SK-N-SH (cell line): ENCODE measurements at regions of chr15 and their contacts with region 1.

Region 1: DNA sequence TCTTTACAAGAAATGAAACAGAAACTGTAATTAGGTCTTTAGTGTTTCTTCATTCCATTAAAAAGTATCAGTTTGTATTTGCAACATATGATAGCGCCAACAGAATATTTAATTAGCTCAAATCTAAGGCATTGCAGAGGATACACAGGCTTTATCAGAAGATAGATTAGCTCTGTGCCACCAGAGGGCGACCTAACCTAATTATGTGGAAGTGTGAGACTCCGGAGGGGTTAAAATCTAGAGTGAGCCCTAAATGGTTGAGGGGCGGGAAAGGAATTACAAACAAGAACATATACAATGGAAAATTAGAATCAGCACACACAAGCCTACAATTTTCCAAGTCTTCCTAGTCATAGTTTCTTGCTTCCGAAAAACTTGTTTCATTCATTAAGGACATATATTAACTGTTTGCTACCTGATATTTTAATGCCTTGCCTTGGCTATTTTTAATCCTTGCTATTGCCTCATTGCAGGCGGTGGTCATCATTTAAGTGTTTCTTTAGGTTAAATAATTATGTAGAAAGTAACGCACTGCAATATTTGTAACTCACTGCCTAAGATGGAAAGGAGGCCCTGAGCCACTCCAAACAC is 18.0 kb upstream of the RYR3 start:
- DNase-seq: peak; percentile 67
- H3K4me3 ChIP-seq: no peak overlapping the region; a peak in 1 of 4 replicates
- H3K27ac ChIP-seq: no peak overlapping the region
- H3K4me1 ChIP-seq: no peaks in the 10 kb centered on the region
- H3K27me3 ChIP-seq: no peaks in the 10 kb centered on the region
- CTCF ChIP-seq: peak; percentile 90
- EP300 ChIP-seq: no peak
- RAD21 ChIP-seq: peak; percentile 87

Region 2: DNA sequence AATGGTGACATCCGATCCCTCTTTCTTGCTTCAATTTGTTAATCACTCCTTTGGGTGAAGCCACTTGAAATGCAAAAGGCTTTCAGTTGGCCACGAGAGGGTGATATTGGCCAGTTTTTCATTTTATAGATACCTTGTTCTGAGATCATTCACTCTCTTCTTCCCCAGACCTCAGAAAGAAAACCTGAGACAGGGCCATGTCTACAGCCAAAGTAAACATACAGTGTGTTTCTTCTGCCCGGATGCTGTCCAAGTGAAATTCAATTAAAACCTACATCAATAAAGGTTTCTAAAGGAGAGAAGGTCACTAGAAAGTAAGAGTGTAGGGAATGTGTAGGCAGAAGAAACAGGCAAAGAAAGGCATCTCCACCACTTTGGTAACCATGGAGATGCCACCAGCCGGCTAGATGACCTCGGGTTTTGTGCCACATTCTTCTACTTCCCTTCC is 58.8 kb before region 1 on chr15:
- CTCF ChIA-PET with region 1: interaction called, 11 read pairs
- POLR2A ChIA-PET with region 1: no interaction called
- DNase-seq: peak; percentile 43
- H3K4me3 ChIP-seq: no peak overlapping the region
- H3K27ac ChIP-seq: peak overlapping the region in 1 of 2 experiments; percentile 8; a peak in 1 of 4 replicates
- H3K4me1 ChIP-seq: no peaks in the 10 kb centered on the region; a peak in 1 of 4 replicates
- H3K27me3 ChIP-seq: no peaks in the 10 kb centered on the region
- CTCF ChIP-seq: peak; percentile 87
- EP300 ChIP-seq: no peak
- RAD21 ChIP-seq: peak; percentile 84

Region 3: DNA sequence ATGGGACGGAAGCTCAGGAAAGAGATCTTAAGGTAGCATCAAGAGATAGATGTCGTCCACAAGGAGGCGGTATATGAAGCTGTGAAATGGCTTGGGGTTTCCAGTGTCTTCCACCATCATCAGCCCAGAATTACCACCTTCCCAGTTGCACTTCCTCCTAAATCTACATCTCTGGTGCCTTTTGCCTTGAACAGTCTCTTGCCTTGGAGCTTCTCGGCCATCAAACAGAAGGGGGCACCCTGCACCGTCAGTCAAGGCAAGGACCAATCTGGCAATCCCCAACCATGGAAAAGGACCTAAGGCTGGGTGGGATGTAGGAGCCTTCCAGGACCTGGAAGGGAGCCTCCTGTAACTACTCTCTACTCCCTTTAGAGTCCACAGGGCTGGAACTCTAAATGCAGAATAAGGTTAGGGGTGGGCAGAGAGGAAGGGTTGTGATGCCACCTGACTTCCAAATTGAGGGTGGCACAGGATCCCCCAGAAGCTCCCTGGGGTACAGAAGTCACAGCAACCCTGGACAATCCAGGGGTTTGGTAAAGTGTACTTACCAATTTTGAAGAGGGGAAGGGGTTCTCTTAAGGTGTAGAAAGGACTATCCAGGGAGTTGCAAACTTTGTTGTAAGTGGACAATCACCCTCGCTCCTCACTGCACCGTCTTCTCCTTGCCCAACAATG is 16.9 kb after region 1 on chr15:
- CTCF ChIA-PET with region 1: interaction called, 15 read pairs
- POLR2A ChIA-PET with region 1: no interaction called
- DNase-seq: peak; percentile 28
- H3K4me3 ChIP-seq: no peak overlapping the region
- H3K27ac ChIP-seq: no peak overlapping the region
- H3K4me1 ChIP-seq: peaks cover 0 to 2% of the 10 kb centered on the region in 2 experiments; a peak in 1 of 4 replicates
- H3K27me3 ChIP-seq: peaks cover 41% of the 10 kb centered on the region
- CTCF ChIP-seq: peak; percentile 21
- EP300 ChIP-seq: no peak
- RAD21 ChIP-seq: peak; percentile 48

Region 4: DNA sequence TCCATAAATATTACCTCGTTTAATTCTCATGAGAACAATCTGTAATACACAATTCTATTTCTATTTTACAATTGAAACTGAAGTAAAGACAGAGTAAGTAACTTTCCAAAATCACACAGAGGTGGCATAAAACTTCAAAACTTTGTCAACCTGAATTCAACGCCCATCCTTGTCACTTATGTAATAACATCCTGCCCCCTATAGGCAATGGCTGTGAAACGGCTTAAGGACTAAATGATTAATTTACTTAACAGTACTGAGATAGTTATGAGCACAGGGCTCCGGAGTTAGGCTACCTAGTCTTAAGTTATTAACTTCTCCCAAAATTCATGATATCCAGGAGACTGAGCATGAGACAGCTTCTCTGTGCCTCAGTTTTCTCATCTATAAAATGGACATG is 382.4 kb after region 1 on chr15:
- CTCF ChIA-PET with region 1: interaction called, 13 read pairs
- POLR2A ChIA-PET with region 1: no interaction called
- DNase-seq: peak; percentile 46
- H3K4me3 ChIP-seq: no peak overlapping the region; a peak in 1 of 4 replicates
- H3K27ac ChIP-seq: no peak overlapping the region
- H3K4me1 ChIP-seq: no peaks in the 10 kb centered on the region
- H3K27me3 ChIP-seq: no peaks in the 10 kb centered on the region; the same call in 1 of the 2 replicates
- CTCF ChIP-seq: peak; percentile 57
- EP300 ChIP-seq: no peak
- RAD21 ChIP-seq: peak; percentile 79

Region 5: DNA sequence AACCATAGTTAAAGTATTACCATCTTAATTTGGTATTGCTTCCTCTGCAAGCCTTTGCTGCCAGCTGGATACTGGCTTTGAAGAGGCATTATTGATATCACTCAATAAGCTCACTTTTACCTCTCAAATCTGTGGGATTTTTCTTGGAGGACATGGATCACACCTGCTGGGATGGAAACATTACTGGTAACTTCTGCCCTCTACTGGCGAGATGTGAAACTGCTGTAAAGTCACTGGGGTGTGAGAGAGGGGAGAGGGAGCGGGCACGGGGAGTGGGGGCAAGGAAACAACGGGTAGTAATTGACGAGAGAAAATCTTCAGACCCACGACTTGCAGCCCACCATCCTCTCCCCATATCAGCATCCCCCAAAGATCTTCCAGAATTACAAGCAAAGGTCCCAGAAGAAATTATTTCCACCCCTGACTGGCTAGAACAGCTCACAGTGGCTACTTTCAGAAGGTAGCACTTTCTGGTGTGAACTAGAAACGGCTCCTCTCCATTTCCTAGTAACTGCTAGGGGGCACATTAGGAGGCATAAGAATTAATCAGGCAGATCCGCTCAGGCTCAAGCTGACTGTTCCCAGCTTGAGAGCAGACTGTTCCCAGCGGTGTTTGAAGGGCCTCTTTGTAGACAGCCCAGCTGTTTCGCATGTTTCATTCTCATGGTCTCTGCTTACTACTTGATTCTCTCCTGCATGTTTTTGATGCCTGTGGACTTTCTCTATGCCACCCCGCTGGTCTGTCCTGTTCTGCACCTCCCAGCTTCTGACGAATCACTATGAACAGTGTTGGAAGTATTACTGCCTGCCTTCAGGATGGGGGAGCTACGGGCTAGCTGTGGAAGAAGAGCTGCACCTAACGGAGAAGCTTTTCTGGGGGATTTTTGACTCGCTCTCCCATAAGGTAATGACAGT is 445.1 kb after region 1 on chr15:
- CTCF ChIA-PET with region 1: interaction called, 14 read pairs
- POLR2A ChIA-PET with region 1: no interaction called
- DNase-seq: peak; percentile 71
- H3K4me3 ChIP-seq: no peak overlapping the region; a peak in 1 of 4 replicates
- H3K27ac ChIP-seq: no peak overlapping the region
- H3K4me1 ChIP-seq: no peaks in the 10 kb centered on the region; a peak in 1 of 4 replicates
- H3K27me3 ChIP-seq: no peaks in the 10 kb centered on the region
- CTCF ChIP-seq: peak; percentile 88
- EP300 ChIP-seq: no peak
- RAD21 ChIP-seq: peak; percentile 68

Region 6: DNA sequence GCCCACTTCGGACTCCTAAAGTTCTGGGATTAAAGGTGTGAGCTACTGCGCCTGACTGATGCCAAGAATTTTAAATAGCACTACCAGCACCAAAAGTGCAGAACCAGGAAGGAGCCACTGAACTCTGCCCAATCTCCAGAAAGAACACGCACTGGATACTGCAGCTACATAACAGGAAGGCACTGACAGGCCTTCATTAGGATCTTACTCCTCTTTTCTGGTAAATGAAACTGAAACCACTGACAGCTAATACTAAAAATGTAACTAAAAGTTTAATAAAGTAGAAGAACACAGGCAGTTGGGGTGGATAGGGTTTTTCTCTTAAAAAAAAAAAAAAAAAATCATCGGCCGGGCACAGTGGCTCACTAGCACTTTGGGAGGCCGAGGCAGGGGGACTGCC is 601.4 kb after region 1 on chr15:
- CTCF ChIA-PET with region 1: no interaction called
- POLR2A ChIA-PET with region 1: no interaction called
- DNase-seq: no peak
- H3K4me3 ChIP-seq: no peak overlapping the region
- H3K27ac ChIP-seq: no peak overlapping the region
- H3K4me1 ChIP-seq: peaks cover 3 to 5% of the 10 kb centered on the region in 2 experiments; a peak in 2 of 4 replicates
- H3K27me3 ChIP-seq: no peaks in the 10 kb centered on the region
- CTCF ChIP-seq: no peak
- EP300 ChIP-seq: no peak
- RAD21 ChIP-seq: no peak